ENCODE measurements at regions of chr12 and their contacts with region 1.

Region 1: DNA sequence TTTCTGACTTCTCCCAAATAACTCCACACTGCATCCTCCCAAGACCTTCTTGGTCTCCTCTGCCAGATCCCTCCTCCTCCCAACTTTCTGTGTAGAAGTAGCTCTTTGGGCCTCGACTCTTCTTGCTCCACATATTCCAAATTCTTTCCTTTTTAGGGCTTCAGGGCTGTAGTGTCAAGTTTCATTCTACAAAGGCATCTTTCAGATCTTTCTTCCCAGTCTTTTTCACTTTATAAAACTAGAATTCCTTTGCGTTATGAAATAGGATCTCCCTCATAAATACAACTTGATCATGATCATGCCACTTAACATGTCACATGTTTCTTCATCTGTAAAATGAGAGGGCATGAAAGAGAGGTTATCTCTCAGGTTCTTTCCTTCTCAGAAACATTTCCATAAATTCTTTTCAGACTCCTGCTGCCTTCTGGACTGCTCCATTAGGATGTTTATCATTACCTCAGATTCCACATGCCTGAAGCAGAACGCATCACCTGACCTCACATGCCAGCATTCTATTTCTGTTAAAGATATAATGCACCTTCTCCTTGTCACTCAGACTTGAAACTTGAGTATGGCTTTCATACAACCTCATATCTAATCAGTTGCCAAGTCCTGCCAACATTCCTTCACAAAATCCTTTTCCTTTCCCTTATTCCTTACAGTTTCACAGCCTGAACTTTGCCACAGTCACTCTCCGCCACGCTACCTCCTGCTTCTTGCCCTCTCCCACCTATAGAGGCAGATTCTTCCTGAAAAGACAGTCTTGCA is 8.5 kb downstream of the SLC38A1 start:
- DNase-seq: no peak
- H3K4me3 ChIP-seq: no peak overlapping the region
- H3K4me3 Mint-ChIP-seq: no peak overlapping the region
- H3K27ac ChIP-seq: no peak overlapping the region
- H3K27ac Mint-ChIP-seq: no peak overlapping the region
- H3K4me1 ChIP-seq: peaks cover 97% of the 10 kb centered on the region
- H3K4me1 Mint-ChIP-seq: peaks cover 35 to 49% (median 40%) of the 10 kb centered on the region in 4 donors
- H3K27me3 ChIP-seq: no peaks in the 10 kb centered on the region
- H3K27me3 Mint-ChIP-seq: no peaks in the 10 kb centered on the region

Region 2: GRCh38 chr12:46242569-46242968 is 17.8 kb before region 1 on chr12:
- CTCF ChIA-PET with region 1: interaction called, 4 read pairs
- POLR2A ChIA-PET with region 1: interaction called, 4 read pairs
- intact Hi-C with region 1: loop called (anchors 2 kb)
- DNase-seq: no peak
- H3K4me3 ChIP-seq: no peak overlapping the region
- H3K4me3 Mint-ChIP-seq: peak overlapping the region in 2 of 8 donors; percentile 13 to 70
- H3K27ac ChIP-seq: no peak overlapping the region
- H3K27ac Mint-ChIP-seq: peak overlapping the region in 5 of 7 donors; percentile 2 to 58 (median 51)
- H3K4me1 ChIP-seq: peaks cover 83% of the 10 kb centered on the region
- H3K4me1 Mint-ChIP-seq: peaks cover 56 to 92% (median 75%) of the 10 kb centered on the region in 4 donors
- H3K27me3 ChIP-seq: no peaks in the 10 kb centered on the region
- H3K27me3 Mint-ChIP-seq: no peaks in the 10 kb centered on the region